CD4-positive, alpha-beta memory T cell (primary cell): ENCODE measurements at regions of chr1 and their contacts with region 1.

Region 1: GRCh38 chr1:229258031-229258756 is 12.7 kb upstream of the RAB4A start:
- DNase-seq: peak; percentile 63 to 73 (median 69)
- H3K4me3 ChIP-seq: no peak overlapping the region
- H3K4me3 Mint-ChIP-seq: peak overlapping the region in 7 of 8 donors; percentile 12 to 82 (median 72)
- H3K27ac ChIP-seq: no peak overlapping the region
- H3K27ac Mint-ChIP-seq: peak overlapping the region; percentile 17 to 93 (median 79)
- H3K4me1 ChIP-seq: peaks cover 40% of the 10 kb centered on the region
- H3K4me1 Mint-ChIP-seq: peaks cover 25 to 34% (median 28%) of the 10 kb centered on the region in 4 donors
- H3K27me3 ChIP-seq: no peaks in the 10 kb centered on the region
- H3K27me3 Mint-ChIP-seq: no peaks in the 10 kb centered on the region

Region 2: GRCh38 chr1:228691926-228692325 is 566.3 kb before region 1 on chr1:
- CTCF ChIA-PET with region 1: interaction called, 39 read pairs
- POLR2A ChIA-PET with region 1: interaction called, 3 read pairs
- intact Hi-C with region 1: loop called (anchors 1 kb)
- DNase-seq: peak; percentile 30 to 46 (median 43)
- H3K4me3 ChIP-seq: no peak overlapping the region
- H3K4me3 Mint-ChIP-seq: no peak overlapping the region
- H3K27ac ChIP-seq: no peak overlapping the region
- H3K27ac Mint-ChIP-seq: no peak overlapping the region
- H3K4me1 ChIP-seq: peaks cover 9% of the 10 kb centered on the region
- H3K4me1 Mint-ChIP-seq: peaks cover 6 to 10% (median 9%) of the 10 kb centered on the region in 4 donors
- H3K27me3 ChIP-seq: no peaks in the 10 kb centered on the region
- H3K27me3 Mint-ChIP-seq: peaks cover 9 to 10% of the 10 kb centered on the region in 2 donors

Region 3: DNA sequence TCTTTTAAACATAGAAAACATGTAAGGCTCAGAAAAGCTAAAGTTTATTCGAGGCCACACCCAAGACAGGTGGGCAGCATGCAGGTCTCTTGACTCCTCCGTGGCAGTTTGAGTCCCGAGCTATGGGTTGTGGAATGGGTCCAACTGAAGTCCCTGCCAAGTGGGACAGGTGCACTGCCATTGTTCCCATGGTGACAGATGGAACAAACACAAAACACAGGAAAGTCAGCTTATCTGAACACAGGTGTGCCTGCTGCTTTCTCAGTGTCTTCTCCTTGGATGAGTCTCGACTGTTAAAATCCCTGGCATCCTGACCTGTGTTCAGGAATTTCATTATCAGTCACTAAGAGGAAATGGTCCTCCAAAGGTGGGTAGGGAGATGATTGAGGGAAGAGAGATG is 86.3 kb before region 1 on chr1:
- CTCF ChIA-PET with region 1: no interaction called
- POLR2A ChIA-PET with region 1: no interaction called
- intact Hi-C with region 1: no loop called
- DNase-seq: no peak
- H3K4me3 ChIP-seq: no peak overlapping the region
- H3K4me3 Mint-ChIP-seq: no peak overlapping the region
- H3K27ac ChIP-seq: no peak overlapping the region
- H3K27ac Mint-ChIP-seq: no peak overlapping the region
- H3K4me1 ChIP-seq: no peaks in the 10 kb centered on the region
- H3K4me1 Mint-ChIP-seq: peaks cover 0 to 3% (median under 1%) of the 10 kb centered on the region in 4 donors
- H3K27me3 ChIP-seq: no peaks in the 10 kb centered on the region
- H3K27me3 Mint-ChIP-seq: peaks cover 1 to 6% of the 10 kb centered on the region in 2 donors

Region 4: GRCh38 chr1:229227298-229227919 is 30.8 kb before region 1 on chr1:
- CTCF ChIA-PET with region 1: interaction called, 131 read pairs
- POLR2A ChIA-PET with region 1: interaction called, 19 read pairs
- intact Hi-C with region 1: loop called (anchors 1 kb)
- DNase-seq: peak; percentile 73 to 81 (median 80)
- H3K4me3 ChIP-seq: no peak overlapping the region
- H3K4me3 Mint-ChIP-seq: peak overlapping the region in 2 of 8 donors; percentile 12 to 53
- H3K27ac ChIP-seq: no peak overlapping the region
- H3K27ac Mint-ChIP-seq: peak overlapping the region in 1 of 7 donors; percentile 11
- H3K4me1 ChIP-seq: peaks cover 10% of the 10 kb centered on the region
- H3K4me1 Mint-ChIP-seq: peaks cover 6 to 16% (median 10%) of the 10 kb centered on the region in 4 donors
- H3K27me3 ChIP-seq: peaks cover 4% of the 10 kb centered on the region
- H3K27me3 Mint-ChIP-seq: no peaks in the 10 kb centered on the region

Region 5: DNA sequence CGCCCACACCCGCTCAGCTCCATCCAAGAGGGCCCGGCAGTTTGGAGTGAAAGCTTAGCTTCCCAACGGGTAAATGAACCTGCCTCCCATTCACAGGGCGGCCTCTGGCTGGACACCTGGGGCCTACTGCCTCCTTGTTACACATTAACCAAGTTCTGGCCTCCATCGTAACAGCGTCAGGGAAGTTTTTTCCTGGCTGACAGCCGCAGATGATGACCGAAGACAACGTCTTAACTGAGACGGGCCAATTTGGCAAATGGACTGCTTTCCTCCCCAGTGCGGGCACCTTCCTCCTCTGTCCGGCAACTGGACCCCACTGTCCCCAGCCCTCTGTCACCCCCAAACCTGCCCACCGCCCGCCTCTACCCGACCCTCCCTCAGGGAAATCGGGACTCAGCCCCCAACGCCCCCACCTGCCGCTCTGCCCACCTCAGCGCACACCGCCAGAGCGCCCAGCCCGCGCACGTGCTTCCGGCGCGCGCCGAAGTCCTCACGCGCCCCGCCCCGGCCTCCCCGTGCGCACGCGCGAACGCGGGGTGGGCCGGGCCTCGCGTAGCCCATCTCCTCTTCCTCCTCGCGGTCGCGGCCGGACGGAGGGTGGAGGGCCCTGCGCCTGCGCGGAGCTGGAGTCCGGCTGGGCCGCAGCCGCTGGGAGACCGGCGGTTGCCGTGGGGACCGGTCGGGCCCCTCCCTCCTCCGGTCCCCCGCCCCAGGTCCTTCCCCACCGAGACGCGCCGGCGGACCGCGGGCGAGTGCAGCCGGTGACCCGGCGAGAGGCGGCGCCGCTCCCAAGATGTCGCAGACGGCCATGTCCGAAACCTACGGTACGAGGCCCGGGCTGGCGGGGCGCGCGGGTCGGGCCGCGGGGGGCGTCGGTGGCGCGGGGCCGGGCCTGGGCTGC is 12.6 kb after region 1 on chr1 and contains the start of gene RAB4A:
- CTCF ChIA-PET with region 1: interaction called, 11 read pairs
- POLR2A ChIA-PET with region 1: interaction called, 9 read pairs
- intact Hi-C with region 1: no loop called
- DNase-seq: peak; percentile 66 to 79 (median 77)
- H3K4me3 ChIP-seq: peak within 1 kb of the TSS; percentile 72 to 76
- H3K4me3 Mint-ChIP-seq: peak within 1 kb of the TSS; percentile 94 to 99 (median 96)
- H3K27ac ChIP-seq: peak within 1 kb of the TSS; percentile 14
- H3K27ac Mint-ChIP-seq: peak within 1 kb of the TSS; percentile 80 to 97 (median 89)
- H3K4me1 ChIP-seq: peaks cover 32% of the 10 kb centered on the region
- H3K4me1 Mint-ChIP-seq: peaks cover 28 to 41% (median 33%) of the 10 kb centered on the region in 4 donors
- H3K27me3 ChIP-seq: no peaks in the 10 kb centered on the region
- H3K27me3 Mint-ChIP-seq: no peaks in the 10 kb centered on the region
- total RNA-seq, gene RAB4A: 43.7 to 44.9 TPM

Region 6: GRCh38 chr1:229370601-229371021 is 112.4 kb after region 1 on chr1:
- CTCF ChIA-PET with region 1: no interaction called
- POLR2A ChIA-PET with region 1: no interaction called
- intact Hi-C with region 1: no loop called
- DNase-seq: no peak
- H3K4me3 ChIP-seq: no peak overlapping the region
- H3K4me3 Mint-ChIP-seq: peak overlapping the region in 1 of 8 donors; percentile 20
- H3K27ac ChIP-seq: no peak overlapping the region
- H3K27ac Mint-ChIP-seq: no peak overlapping the region
- H3K4me1 ChIP-seq: no peaks in the 10 kb centered on the region
- H3K4me1 Mint-ChIP-seq: no peaks in the 10 kb centered on the region
- H3K27me3 ChIP-seq: no peaks in the 10 kb centered on the region
- H3K27me3 Mint-ChIP-seq: peaks cover 4 to 13% of the 10 kb centered on the region in 2 donors

Region 7: GRCh38 chr1:229452956-229453801 is 195.0 kb after region 1 on chr1:
- CTCF ChIA-PET with region 1: interaction called, 7 read pairs
- POLR2A ChIA-PET with region 1: no interaction called
- intact Hi-C with region 1: loop called (anchors 1 kb)
- DNase-seq: no peak
- H3K4me3 ChIP-seq: no peak overlapping the region
- H3K4me3 Mint-ChIP-seq: no peak overlapping the region
- H3K27ac ChIP-seq: no peak overlapping the region
- H3K27ac Mint-ChIP-seq: no peak overlapping the region
- H3K4me1 ChIP-seq: no peaks in the 10 kb centered on the region
- H3K4me1 Mint-ChIP-seq: peaks cover 0 to 5% (median 3%) of the 10 kb centered on the region in 4 donors
- H3K27me3 ChIP-seq: no peaks in the 10 kb centered on the region
- H3K27me3 Mint-ChIP-seq: no peaks in the 10 kb centered on the region

Region 8: GRCh38 chr1:229507951-229508822 is 250.0 kb after region 1 on chr1 and contains the start of gene NUP133:
- CTCF ChIA-PET with region 1: interaction called, 35 read pairs
- POLR2A ChIA-PET with region 1: interaction called, 16 read pairs
- intact Hi-C with region 1: loop called (anchors 1 kb)
- DNase-seq: peak; percentile 96 to 98 (median 96)
- H3K4me3 ChIP-seq: peak within 1 kb of the TSS; percentile 90 to 93
- H3K4me3 Mint-ChIP-seq: peak within 1 kb of the TSS; percentile 87 to 95 (median 92)
- H3K27ac ChIP-seq: peak within 1 kb of the TSS; percentile 87
- H3K27ac Mint-ChIP-seq: peak within 1 kb of the TSS; percentile 97 to 99 (median 98)
- H3K4me1 ChIP-seq: peaks cover 22% of the 10 kb centered on the region
- H3K4me1 Mint-ChIP-seq: peaks cover 19 to 40% (median 32%) of the 10 kb centered on the region in 4 donors
- H3K27me3 ChIP-seq: no peaks in the 10 kb centered on the region
- H3K27me3 Mint-ChIP-seq: peaks cover 0 to 2% of the 10 kb centered on the region in 2 donors
- total RNA-seq, gene NUP133: 45.8 to 48.4 TPM

Region 9: GRCh38 chr1:230167419-230167852 is 909.2 kb after region 1 on chr1:
- CTCF ChIA-PET with region 1: interaction called, 3 read pairs
- POLR2A ChIA-PET with region 1: no interaction called
- intact Hi-C with region 1: loop called (anchors 2 kb)
- DNase-seq: peak; percentile 30 to 52 (median 47)
- H3K4me3 ChIP-seq: no peak overlapping the region
- H3K4me3 Mint-ChIP-seq: peak overlapping the region in 1 of 8 donors; percentile 7
- H3K27ac ChIP-seq: no peak overlapping the region
- H3K27ac Mint-ChIP-seq: peak overlapping the region in 3 of 7 donors; percentile 3 to 9 (median 9)
- H3K4me1 ChIP-seq: peaks cover 14% of the 10 kb centered on the region
- H3K4me1 Mint-ChIP-seq: peaks cover 14 to 25% (median 24%) of the 10 kb centered on the region in 4 donors
- H3K27me3 ChIP-seq: no peaks in the 10 kb centered on the region
- H3K27me3 Mint-ChIP-seq: no peaks in the 10 kb centered on the region